Activated CD4-positive, alpha-beta memory T cell treated with anti-CD3 and anti-CD28 coated beads, Interleukin-2, amount 10 ng/mL, durations not matched to agents 7 days and 5 days (primary cell): ENCODE measurements at regions of chr5 and their contacts with region 1.

Region 1: DNA sequence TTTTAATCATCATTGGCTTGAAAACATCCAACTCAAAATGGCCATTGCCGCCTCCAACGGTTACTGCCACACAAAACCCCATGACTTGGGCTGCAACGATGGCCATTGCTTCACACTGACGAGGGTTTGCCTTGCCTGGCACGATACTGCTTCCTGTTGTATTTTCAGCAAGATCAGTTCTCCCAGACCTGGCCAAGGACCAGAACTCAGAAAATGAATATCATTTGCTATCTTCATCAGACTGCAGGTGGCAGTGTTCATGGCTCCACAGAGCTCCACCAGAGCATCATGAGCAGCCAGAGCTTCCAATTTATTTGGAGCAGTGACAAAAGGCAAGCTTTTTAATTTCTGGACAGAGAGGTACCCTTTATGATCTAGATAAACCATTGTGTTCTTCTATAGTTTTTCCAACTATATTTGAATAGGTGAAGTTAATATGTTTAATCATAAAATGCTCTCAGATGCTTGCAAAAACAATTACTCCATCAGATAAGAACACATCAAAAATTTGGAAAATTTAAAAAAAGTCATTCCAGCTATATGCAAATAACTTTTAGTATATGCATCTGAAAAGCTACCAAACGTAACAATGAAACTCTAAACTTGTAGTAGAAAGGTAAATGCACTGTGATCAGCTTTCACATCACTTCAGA is 10.4 kb downstream of the AMACR start:
- DNase-seq: peak; percentile 32
- H3K4me3 Mint-ChIP-seq: no peak overlapping the region
- H3K27ac Mint-ChIP-seq: no peak overlapping the region
- H3K4me1 Mint-ChIP-seq: peaks cover 30% of the 10 kb centered on the region
- H3K27me3 Mint-ChIP-seq: no peaks in the 10 kb centered on the region

Region 2: GRCh38 chr5:33840927-33841547 is 156.4 kb before region 1 on chr5:
- CTCF ChIA-PET with region 1: no interaction called
- POLR2A ChIA-PET with region 1: no interaction called
- DNase-seq: no peak
- H3K4me3 Mint-ChIP-seq: no peak overlapping the region
- H3K27ac Mint-ChIP-seq: peak overlapping the region; percentile 23
- H3K4me1 Mint-ChIP-seq: peaks cover 16% of the 10 kb centered on the region
- H3K27me3 Mint-ChIP-seq: peaks cover 30% of the 10 kb centered on the region

Region 3: GRCh38 chr5:34007621-34008600 is 10.5 kb after region 1 on chr5 and contains the start of gene AMACR:
- CTCF ChIA-PET with region 1: interaction called, 16 read pairs
- POLR2A ChIA-PET with region 1: interaction called, 5 read pairs
- DNase-seq: peak; percentile 86
- H3K4me3 Mint-ChIP-seq: peak within 1 kb of the TSS; percentile 79
- H3K27ac Mint-ChIP-seq: peak within 1 kb of the TSS; percentile 89
- H3K4me1 Mint-ChIP-seq: peaks cover 36% of the 10 kb centered on the region
- H3K27me3 Mint-ChIP-seq: peaks cover 2% of the 10 kb centered on the region
- total RNA-seq, gene AMACR: 7.5 to 7.8 TPM

Region 4: DNA sequence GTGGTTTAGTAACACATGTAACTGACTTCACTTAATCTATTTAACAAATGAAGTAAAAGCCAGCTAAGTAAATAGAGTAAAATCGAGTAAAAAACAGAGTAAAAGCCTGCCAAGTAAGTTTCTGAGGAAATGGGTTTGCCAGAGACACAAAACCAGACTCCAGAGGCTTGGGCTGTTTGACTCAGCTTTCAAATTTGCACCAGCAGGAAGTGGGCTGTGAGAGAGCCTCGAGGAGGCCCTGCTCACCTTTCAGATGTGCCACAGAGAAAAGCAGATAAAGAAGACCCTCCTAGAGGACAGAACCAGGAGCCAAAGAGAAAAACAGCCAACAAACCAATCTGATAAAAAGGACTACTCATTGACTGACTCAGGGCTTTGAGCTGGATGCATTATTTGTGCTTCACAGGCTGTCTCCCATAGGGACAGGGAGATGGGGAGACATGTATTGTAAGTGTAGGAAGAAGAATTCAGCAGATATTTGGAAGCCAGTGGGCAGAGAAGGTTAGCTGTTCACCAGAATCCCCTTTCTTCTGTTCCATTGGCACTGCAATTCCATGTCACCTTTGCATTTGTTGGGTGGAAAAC is 24.8 kb after region 1 on chr5:
- CTCF ChIA-PET with region 1: interaction called, 11 read pairs
- POLR2A ChIA-PET with region 1: interaction called, 4 read pairs
- DNase-seq: peak; percentile 64
- H3K4me3 Mint-ChIP-seq: peak overlapping the region; percentile 2
- H3K27ac Mint-ChIP-seq: peak overlapping the region; percentile 80
- H3K4me1 Mint-ChIP-seq: peaks cover 33% of the 10 kb centered on the region
- H3K27me3 Mint-ChIP-seq: no peaks in the 10 kb centered on the region